B cell (primary cell): ENCODE measurements at regions of chr17 and their contacts with region 1.

Region 1: GRCh38 chr17:17280613-17281549 is at the start of gene COPS3:
- DNase-seq: peak; percentile 99
- ATAC-seq: peak; percentile 88
- H3K4me3 ChIP-seq: peak within 1 kb of the TSS; percentile 67 to 99 (median 98)
- H3K4me3 Mint-ChIP-seq: peak within 1 kb of the TSS; percentile 86
- H3K27ac ChIP-seq: peak within 1 kb of the TSS; percentile 87 to 98
- H3K27ac Mint-ChIP-seq: peak within 1 kb of the TSS; percentile 85
- H3K4me1 ChIP-seq: peaks cover 20% of the 10 kb centered on the region in 2 donors
- H3K4me1 Mint-ChIP-seq: peaks cover 36% of the 10 kb centered on the region
- H3K27me3 ChIP-seq: no peaks in the 10 kb centered on the region
- H3K27me3 Mint-ChIP-seq: no peaks in the 10 kb centered on the region
- CTCF ChIP-seq: no peak
- total RNA-seq, gene COPS3: 45.5 and 46.9 TPM in 2 replicates

Region 2: DNA sequence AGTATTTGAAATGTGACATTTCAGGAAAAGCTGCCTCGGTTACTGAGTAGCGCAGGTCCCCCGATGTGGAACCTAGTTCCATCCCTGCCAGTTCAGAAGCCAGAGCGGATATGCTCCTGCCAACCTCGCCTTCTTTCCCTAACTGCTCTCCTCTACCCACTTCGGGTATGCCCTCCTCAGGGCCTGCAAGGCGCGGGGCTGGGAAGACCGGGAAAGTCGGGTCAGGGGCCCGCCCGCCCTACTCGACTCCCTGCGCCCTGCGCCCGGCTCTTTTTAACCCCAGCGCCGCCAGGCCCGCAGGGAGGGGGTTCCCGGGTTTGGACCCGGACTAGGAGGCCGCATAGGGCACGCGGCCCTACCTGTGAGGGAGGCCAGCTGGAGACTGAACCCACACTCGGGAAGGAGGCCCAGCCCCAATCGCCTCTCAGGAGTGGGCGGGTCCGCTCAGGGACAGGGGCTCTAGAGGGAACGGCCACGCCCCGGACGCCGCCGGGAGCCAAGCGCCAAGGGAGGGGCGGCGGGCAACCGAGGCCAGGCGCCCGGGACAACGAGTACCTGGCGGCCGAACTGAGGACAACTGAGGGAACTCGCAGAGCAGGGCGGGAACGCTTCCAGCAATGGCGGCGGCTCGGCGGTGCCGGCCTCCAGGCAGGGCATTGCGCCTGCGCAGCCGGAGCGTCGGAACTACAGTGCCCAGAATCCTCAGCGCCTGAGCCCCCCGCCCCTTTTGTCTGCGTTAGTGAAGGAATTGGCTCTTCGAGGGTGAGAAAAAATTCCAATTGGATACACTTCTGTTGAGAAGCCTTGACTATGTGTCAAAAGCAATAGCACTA is 627.5 kb before region 1 on chr17 and contains the start of gene ZNF624:
- CTCF ChIA-PET with region 1: no interaction called
- POLR2A ChIA-PET with region 1: no interaction called
- intact Hi-C with region 1: loop called (anchors 5 kb)
- DNase-seq: peak; percentile 91
- ATAC-seq: peak; percentile 95
- H3K4me3 ChIP-seq: peak within 1 kb of the TSS; percentile 54 to 96 (median 86)
- H3K4me3 Mint-ChIP-seq: peak within 1 kb of the TSS; percentile 94
- H3K27ac ChIP-seq: peak within 1 kb of the TSS; percentile 39 to 78
- H3K27ac Mint-ChIP-seq: peak within 1 kb of the TSS; percentile 87
- H3K4me1 ChIP-seq: peaks cover 6 to 11% of the 10 kb centered on the region in 2 donors
- H3K4me1 Mint-ChIP-seq: peaks cover 16% of the 10 kb centered on the region
- H3K27me3 ChIP-seq: peaks cover 0 to 5% (median 1%) of the 10 kb centered on the region in 4 experiments
- H3K27me3 Mint-ChIP-seq: peaks cover 7% of the 10 kb centered on the region
- CTCF ChIP-seq: no peak
- total RNA-seq, gene ZNF624: 12.0 and 13.5 TPM in 2 replicates

Region 3: DNA sequence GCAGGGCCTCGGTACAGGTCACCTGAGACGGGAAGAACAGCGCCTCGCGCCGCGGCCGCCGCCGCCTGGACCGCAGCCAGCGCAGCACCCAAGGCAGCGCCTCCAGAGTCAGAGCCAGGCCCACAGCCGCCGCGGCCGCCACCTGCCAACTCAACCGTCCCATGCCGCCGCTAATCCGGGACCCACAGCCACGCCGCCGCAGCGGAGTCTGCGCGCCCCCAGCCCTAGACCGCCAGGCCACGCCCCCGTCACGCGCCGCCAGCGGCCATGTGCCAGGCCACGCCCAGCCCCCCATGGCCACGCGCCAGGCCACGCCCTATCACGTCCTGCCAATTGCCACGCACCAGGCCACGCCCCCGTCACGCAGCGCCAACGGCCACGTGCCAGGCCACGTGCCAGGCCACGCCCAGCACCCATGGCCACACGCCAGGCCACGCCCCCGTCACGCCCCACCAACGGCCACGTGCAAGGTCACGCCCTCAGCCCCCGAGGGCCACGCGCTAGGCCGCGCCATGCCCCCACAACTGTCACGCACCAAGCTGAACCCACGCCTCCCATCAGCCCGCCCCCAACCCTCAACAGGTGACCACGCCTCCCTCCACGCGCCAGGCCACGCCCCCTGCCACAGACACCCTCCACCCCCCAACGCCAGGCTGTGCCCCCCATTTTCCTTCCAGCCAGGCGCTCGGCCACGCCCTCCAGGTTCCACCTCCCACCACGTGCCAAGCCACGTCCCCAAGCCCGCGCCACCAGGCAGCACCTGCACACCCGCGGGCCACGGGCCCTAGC is 74.6 kb before region 1 on chr17 and contains the start of gene PLD6:
- CTCF ChIA-PET with region 1: no interaction called
- POLR2A ChIA-PET with region 1: no interaction called
- intact Hi-C with region 1: loop called (anchors 1 kb)
- DNase-seq: peak; percentile 96
- ATAC-seq: peak; percentile 85
- H3K4me3 ChIP-seq: peak within 1 kb of the TSS in 4 of 5 experiments; percentile 57 to 71 (median 59)
- H3K4me3 Mint-ChIP-seq: peak within 1 kb of the TSS; percentile 93
- H3K27ac ChIP-seq: peak within 1 kb of the TSS; percentile 65 to 66
- H3K27ac Mint-ChIP-seq: peak within 1 kb of the TSS; percentile 89
- H3K4me1 ChIP-seq: peaks cover 14 to 25% of the 10 kb centered on the region in 2 donors
- H3K4me1 Mint-ChIP-seq: peaks cover 20% of the 10 kb centered on the region
- H3K27me3 ChIP-seq: no peaks in the 10 kb centered on the region
- H3K27me3 Mint-ChIP-seq: no peaks in the 10 kb centered on the region
- CTCF ChIP-seq: no peak
- total RNA-seq, gene PLD6: 4.1 and 5.0 TPM in 2 replicates

Region 4: GRCh38 chr17:17303010-17303846 is 22.3 kb after region 1 on chr17 and contains the start of gene NT5M:
- CTCF ChIA-PET with region 1: no interaction called
- POLR2A ChIA-PET with region 1: no interaction called
- intact Hi-C with region 1: loop called (anchors 1 kb)
- DNase-seq: peak; percentile 77
- ATAC-seq: peak; percentile 77
- H3K4me3 ChIP-seq: peak within 1 kb of the TSS; percentile 40 to 64 (median 56)
- H3K4me3 Mint-ChIP-seq: peak within 1 kb of the TSS; percentile 91
- H3K27ac ChIP-seq: no peak within 1 kb of the TSS
- H3K27ac Mint-ChIP-seq: peak within 1 kb of the TSS; percentile 66
- H3K4me1 ChIP-seq: peaks cover 37 to 42% of the 10 kb centered on the region in 2 donors
- H3K4me1 Mint-ChIP-seq: peaks cover 41% of the 10 kb centered on the region
- H3K27me3 ChIP-seq: peaks cover 0 to 6% (median under 1%) of the 10 kb centered on the region in 4 experiments
- H3K27me3 Mint-ChIP-seq: no peaks in the 10 kb centered on the region
- CTCF ChIP-seq: no peak
- total RNA-seq, gene NT5M: 0.46 and 0.47 TPM in 2 replicates

Region 5: DNA sequence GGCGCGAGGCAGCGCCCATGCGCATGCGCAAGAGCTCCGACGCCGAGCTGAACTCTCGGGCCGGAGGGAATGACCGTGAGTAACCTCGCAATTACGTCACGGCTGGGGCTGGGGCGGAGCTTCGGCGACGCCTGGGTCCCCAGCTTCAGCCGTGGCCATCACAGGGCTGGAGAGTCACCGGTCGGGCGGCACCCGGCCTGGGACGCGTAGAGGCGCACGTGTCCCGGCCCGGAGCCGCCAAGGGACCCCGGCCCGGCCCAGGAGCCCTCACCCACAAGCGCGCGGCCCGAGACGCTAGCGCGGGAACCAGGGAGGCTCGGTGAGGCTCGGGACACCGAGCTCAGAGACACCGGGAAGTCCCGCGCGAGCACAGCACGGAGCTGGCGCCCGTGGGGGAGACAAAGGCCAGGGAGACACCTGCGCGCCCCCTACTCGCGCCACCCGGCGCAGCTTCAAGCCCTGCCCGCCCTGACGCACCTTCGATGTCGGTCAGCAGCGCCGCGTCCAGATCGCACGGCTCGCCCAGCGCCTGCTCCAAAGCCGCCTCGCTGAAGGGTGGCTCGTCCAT is 555.5 kb after region 1 on chr17:
- CTCF ChIA-PET with region 1: no interaction called
- POLR2A ChIA-PET with region 1: no interaction called
- intact Hi-C with region 1: loop called (anchors 2 kb)
- DNase-seq: peak; percentile 98
- ATAC-seq: peak; percentile 69
- H3K4me3 ChIP-seq: peak overlapping the region; percentile 23 to 91 (median 89)
- H3K4me3 Mint-ChIP-seq: peak overlapping the region; percentile 88
- H3K27ac ChIP-seq: peak overlapping the region; percentile 93 to 97
- H3K27ac Mint-ChIP-seq: peak overlapping the region; percentile 91
- H3K4me1 ChIP-seq: peaks cover 45 to 64% of the 10 kb centered on the region in 2 donors
- H3K4me1 Mint-ChIP-seq: peaks cover 61% of the 10 kb centered on the region
- H3K27me3 ChIP-seq: no peaks in the 10 kb centered on the region
- H3K27me3 Mint-ChIP-seq: no peaks in the 10 kb centered on the region
- CTCF ChIP-seq: no peak